AG04450 (cell line): ENCODE measurements at regions of chr4 and their contacts with region 1.

Region 1: GRCh38 chr4:77007358-77008191 is 58.0 kb downstream of the SEPTIN11 start:
- DNase-seq: no peak
- H3K4me3 ChIP-seq: no peak overlapping the region
- H3K27ac ChIP-seq: peak overlapping the region; percentile 69
- H3K27me3 ChIP-seq: no peaks in the 10 kb centered on the region
- CTCF ChIP-seq: no peak

Region 2: DNA sequence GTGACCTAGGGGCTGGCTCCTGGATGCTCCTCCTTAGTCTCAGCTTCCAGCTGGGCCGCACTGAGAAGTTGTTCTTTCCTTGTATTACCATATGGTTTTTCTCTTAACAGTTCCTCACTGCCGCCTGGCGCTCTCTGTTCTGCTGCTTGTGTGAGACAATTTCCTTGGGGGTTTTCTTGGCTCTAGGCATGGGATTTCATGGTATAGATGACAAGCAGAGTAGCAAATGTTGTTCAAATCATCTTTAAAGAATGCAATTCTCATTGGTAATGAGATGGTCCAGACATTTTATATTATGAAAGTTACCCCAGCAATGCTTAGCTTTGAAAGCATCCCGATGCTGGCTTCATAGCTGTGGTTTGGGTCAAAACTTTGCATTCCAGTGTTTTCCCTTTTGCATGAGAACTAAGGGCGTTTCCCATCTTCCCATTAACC is 20.4 kb before region 1 on chr4:
- CTCF ChIA-PET with region 1: no interaction called
- POLR2A ChIA-PET with region 1: interaction called, 13 read pairs
- DNase-seq: peak; percentile 96
- H3K4me3 ChIP-seq: peak overlapping the region; percentile 14; the same call in 1 of the 2 replicates
- H3K27ac ChIP-seq: peak overlapping the region; percentile 96
- H3K27me3 ChIP-seq: no peaks in the 10 kb centered on the region
- CTCF ChIP-seq: peak; percentile 14; the same call in 1 of the 2 replicates